ENCODE measurements at regions of chr10 and their contacts with region 1.

Region 1: GRCh38 chr10:68988530-68989316 is at the start of gene KIFBP:
- DNase-seq: peak; percentile 91
- ATAC-seq: peak; percentile 89
- H3K4me3 Mint-ChIP-seq: peak within 1 kb of the TSS; percentile 86
- H3K27ac Mint-ChIP-seq: peak within 1 kb of the TSS; percentile 86
- H3K4me1 Mint-ChIP-seq: peaks cover 51% of the 10 kb centered on the region
- H3K27me3 Mint-ChIP-seq: no peaks in the 10 kb centered on the region
- total RNA-seq, gene KIFBP: 12.9 to 15.6 TPM

Region 2: DNA sequence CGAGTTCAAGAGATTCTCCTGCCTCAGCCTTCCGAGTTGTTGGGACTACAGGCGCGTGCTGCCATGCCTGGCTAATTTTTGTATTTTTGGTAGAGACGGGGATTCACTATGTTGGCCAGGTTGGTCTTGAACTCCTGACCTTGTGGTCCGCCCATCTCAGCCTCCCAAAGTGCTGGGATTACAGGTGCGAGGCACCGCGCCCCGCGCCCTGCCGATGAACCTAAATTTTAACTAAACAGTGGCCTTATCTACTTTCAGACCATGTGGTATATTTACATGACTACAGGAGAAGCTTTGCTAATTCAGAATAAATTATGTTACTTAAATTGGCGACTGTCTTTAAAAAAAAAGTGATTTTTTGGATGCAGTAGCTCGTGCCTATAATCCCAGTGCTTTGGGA is 1095.1 kb before region 1 on chr10:
- CTCF ChIA-PET with region 1: no interaction called
- POLR2A ChIA-PET with region 1: no interaction called
- intact Hi-C with region 1: no loop called
- DNase-seq: no peak
- ATAC-seq: no peak
- H3K4me3 Mint-ChIP-seq: no peak overlapping the region
- H3K27ac Mint-ChIP-seq: no peak overlapping the region
- H3K4me1 Mint-ChIP-seq: peaks cover 23% of the 10 kb centered on the region
- H3K27me3 Mint-ChIP-seq: no peaks in the 10 kb centered on the region

Region 3: DNA sequence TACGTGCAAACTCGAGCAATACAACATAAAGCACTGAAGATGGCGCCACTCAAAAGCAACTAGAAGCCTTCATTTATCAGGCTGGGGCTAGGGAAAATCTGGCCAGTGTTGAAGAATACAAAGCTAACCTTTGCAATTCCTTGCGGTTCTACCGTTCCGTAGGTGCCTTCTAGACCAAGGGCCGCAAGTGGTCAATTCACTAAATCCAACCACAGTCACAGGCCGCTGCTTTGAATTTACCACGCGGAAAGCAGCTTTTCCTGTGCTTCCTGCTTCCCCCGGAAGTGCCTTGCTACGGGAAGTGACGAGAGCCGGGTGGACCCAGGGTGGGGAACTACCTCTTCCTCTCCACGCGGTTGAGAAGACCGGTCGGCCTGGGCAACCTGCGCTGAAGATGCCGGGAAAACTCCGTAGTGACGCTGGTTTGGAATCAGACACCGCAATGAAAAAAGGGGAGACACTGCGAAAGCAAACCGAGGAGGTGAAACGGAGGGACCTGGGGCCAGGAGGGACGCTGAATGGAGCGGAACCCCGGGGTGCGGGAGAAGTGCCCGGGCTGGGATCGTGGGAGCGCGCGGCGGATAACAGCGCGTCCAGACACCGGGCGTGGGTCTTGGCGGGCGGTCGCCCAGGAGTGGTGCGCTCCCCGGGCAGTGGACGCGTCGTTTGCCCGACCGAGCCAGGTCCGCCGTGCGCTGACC is 32.7 kb before region 1 on chr10 and contains the start of gene DDX21:
- CTCF ChIA-PET with region 1: interaction called, 17 read pairs
- POLR2A ChIA-PET with region 1: interaction called, 3 read pairs
- intact Hi-C with region 1: loop called in 1 of 2 experiments (anchors 1 kb)
- DNase-seq: peak; percentile 94
- ATAC-seq: peak; percentile 85
- H3K4me3 Mint-ChIP-seq: peak within 1 kb of the TSS; percentile 98
- H3K27ac Mint-ChIP-seq: peak within 1 kb of the TSS; percentile 100
- H3K4me1 Mint-ChIP-seq: peaks cover 35% of the 10 kb centered on the region
- H3K27me3 Mint-ChIP-seq: no peaks in the 10 kb centered on the region
- total RNA-seq, gene DDX21: 187 to 192 TPM

Region 4: DNA sequence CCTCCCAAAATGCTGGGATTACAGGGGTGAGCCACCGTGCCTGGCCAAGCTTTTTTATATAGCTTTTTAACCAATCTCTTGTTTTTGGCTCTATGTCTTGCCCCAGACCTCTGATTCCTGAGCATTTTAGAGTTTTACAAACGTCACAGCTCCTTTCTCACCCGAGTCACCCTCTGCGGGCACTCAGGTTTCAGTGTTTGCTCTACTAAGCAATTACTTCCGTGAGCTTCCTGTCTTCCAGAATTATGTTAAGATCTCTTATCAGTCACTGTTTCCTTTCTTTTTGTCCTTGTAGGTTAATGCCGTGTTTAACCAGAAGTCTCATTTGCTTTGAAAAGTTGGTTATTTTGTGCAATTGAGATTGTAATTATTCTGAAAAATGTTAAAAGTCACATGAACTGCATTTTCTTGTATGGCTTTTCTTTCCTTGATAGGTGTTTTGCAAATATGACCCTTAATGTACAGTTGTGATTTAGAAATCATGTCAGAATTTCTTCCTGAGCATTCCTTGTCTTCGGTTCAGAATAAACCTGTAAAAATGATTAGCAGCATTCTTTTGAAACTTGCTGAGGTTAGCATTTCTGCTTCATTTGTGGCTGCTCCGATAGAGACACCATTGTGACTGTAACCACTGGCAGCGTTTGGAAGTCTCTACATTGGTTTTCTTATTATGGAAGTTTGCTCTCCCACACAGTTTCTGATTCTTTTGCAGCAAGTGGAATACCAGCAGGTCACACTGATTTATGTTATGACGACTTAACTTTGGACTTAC is 226.9 kb after region 1 on chr10:
- CTCF ChIA-PET with region 1: no interaction called
- POLR2A ChIA-PET with region 1: no interaction called
- intact Hi-C with region 1: loop called in 1 of 2 experiments (anchors 2 kb)
- DNase-seq: peak; percentile 72
- ATAC-seq: peak; percentile 80
- H3K4me3 Mint-ChIP-seq: peak overlapping the region; percentile 15
- H3K27ac Mint-ChIP-seq: peak overlapping the region; percentile 81
- H3K4me1 Mint-ChIP-seq: peaks cover 36% of the 10 kb centered on the region
- H3K27me3 Mint-ChIP-seq: no peaks in the 10 kb centered on the region

Region 5: GRCh38 chr10:69222157-69223027 is 233.7 kb after region 1 on chr10:
- CTCF ChIA-PET with region 1: no interaction called
- POLR2A ChIA-PET with region 1: interaction called, 4 read pairs
- intact Hi-C with region 1: loop called in 1 of 2 experiments (anchors 1 kb)
- DNase-seq: peak; percentile 90
- ATAC-seq: peak; percentile 92
- H3K4me3 Mint-ChIP-seq: peak overlapping the region; percentile 52
- H3K27ac Mint-ChIP-seq: peak overlapping the region; percentile 91
- H3K4me1 Mint-ChIP-seq: peaks cover 32% of the 10 kb centered on the region
- H3K27me3 Mint-ChIP-seq: no peaks in the 10 kb centered on the region

Measured in activated CD4-positive, alpha-beta T cell treated with anti-CD3 and anti-CD28 coated beads for 36 hours (primary cell).